ENCODE measurements at regions of chr22 and their contacts with region 1.

Region 1: DNA sequence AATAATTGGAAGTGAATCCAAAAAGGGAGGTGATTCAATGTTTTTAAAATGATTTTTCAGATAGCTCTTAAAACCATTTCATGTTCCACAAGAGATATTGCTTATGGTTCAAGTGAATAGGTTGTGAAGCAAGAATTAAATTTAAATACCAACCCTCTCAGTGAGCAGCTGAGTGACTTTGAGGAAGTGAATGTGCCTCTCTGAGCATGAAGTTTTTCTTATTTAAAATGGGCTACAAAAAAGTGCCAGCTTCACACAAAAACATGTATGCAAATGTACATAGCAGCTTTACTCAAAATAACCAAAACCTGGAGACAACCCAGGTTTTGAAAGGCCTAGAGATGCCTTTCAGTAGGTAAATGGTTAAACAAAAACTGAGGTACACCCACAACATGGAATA is 35.5 kb upstream of the GAB4 start:
- DNase-seq: no peak
- ATAC-seq: no peak
- H3K4me3 ChIP-seq: no peak overlapping the region
- H3K27ac ChIP-seq: no peak overlapping the region
- H3K4me1 ChIP-seq: peaks cover 3% of the 10 kb centered on the region; the same call in 1 of the 2 replicates
- H3K27me3 ChIP-seq: no peaks in the 10 kb centered on the region
- CTCF ChIP-seq: no peak

Region 2: GRCh38 chr22:17140826-17141766 is 97.6 kb after region 1 on chr22:
- CTCF ChIA-PET with region 1: no interaction called
- POLR2A ChIA-PET with region 1: no interaction called
- in situ Hi-C with region 1: no loop called
- intact Hi-C with region 1: no loop called
- DNase-seq: no peak
- ATAC-seq: no peak
- H3K4me3 ChIP-seq: no peak overlapping the region
- H3K27ac ChIP-seq: no peak overlapping the region
- H3K4me1 ChIP-seq: no peaks in the 10 kb centered on the region
- H3K27me3 ChIP-seq: no peaks in the 10 kb centered on the region
- CTCF ChIP-seq: no peak

Region 3: GRCh38 chr22:17446698-17447097 is 403.2 kb after region 1 on chr22:
- CTCF ChIA-PET with region 1: no interaction called
- POLR2A ChIA-PET with region 1: interaction called, 10 read pairs
- in situ Hi-C with region 1: no loop called
- intact Hi-C with region 1: no loop called
- DNase-seq: no peak
- ATAC-seq: no peak
- H3K4me3 ChIP-seq: no peak overlapping the region
- H3K27ac ChIP-seq: no peak overlapping the region
- H3K4me1 ChIP-seq: no peaks in the 10 kb centered on the region
- H3K27me3 ChIP-seq: no peaks in the 10 kb centered on the region
- CTCF ChIP-seq: no peak

Measured in Panc1 (cell line).